Thyroid gland (tissue), 4 donors: ENCODE measurements at regions of chr4 and their contacts with region 1.

Region 1: GRCh38 chr4:153344131-153345010 is at the start of gene MND1:
- DNase-seq: peak; percentile 83 to 89
- H3K4me3 ChIP-seq: peak within 1 kb of the TSS; percentile 28 to 71 (median 41)
- H3K27ac ChIP-seq: peak within 1 kb of the TSS in 1 of 3 donors; percentile 28
- H3K4me1 ChIP-seq: peaks cover 4 to 16% of the 10 kb centered on the region in 2 donors
- H3K27me3 ChIP-seq: no peaks in the 10 kb centered on the region
- CTCF ChIP-seq: peak; percentile 68 to 99 (median 86)
- POLR2A ChIP-seq: no peak
- total RNA-seq, gene MND1: 0.89 to 1.6 TPM in 2 of 4 donors, not detected in the others

Region 2: GRCh38 chr4:153466081-153466948 is 121.9 kb after region 1 on chr4 and contains the start of gene TMEM131L:
- intact Hi-C with region 1: loop called (anchors 10 kb)
- DNase-seq: peak; percentile 60 to 64
- H3K4me3 ChIP-seq: peak within 1 kb of the TSS; percentile 50 to 73 (median 57)
- H3K27ac ChIP-seq: peak within 1 kb of the TSS; percentile 3 to 76 (median 75)
- H3K4me1 ChIP-seq: peaks cover 7 to 25% of the 10 kb centered on the region in 2 donors
- H3K27me3 ChIP-seq: no peaks in the 10 kb centered on the region
- CTCF ChIP-seq: peak in 1 of 6 experiments; percentile 11
- POLR2A ChIP-seq: peak in 1 of 2 donors; percentile 77
- total RNA-seq, gene TMEM131L: 11.1 to 17.9 (median 16.4) TPM